Activated CD4-positive, alpha-beta T cell treated with anti-CD3 and anti-CD28 coated beads for 36 hours (primary cell): ENCODE measurements at regions of chr6 and their contacts with region 1.

Region 1: DNA sequence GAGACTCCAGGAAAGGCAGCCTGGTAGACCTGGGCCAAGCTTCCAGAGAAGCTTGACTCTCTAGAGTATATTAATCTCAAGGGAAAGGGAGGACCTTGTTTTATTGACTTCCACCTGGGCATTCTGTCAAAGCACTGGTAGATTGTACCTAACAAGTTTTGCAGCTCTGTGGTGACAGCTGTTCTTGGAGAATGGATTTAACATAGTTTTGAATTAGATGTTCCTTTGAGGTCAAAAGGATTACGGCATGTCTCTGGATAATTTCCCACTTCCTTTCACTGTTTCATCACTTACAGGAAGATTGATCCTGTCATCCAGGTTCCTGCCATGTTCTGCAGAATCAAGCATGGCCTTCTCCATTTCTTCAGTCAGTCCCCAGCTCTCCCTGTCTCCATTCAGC is 246.0 kb downstream of the PHACTR1 start:
- DNase-seq: no peak
- ATAC-seq: no peak
- H3K4me3 Mint-ChIP-seq: no peak overlapping the region
- H3K27ac Mint-ChIP-seq: no peak overlapping the region
- H3K4me1 Mint-ChIP-seq: peaks cover 16% of the 10 kb centered on the region
- H3K27me3 Mint-ChIP-seq: peaks cover 31% of the 10 kb centered on the region

Region 2: DNA sequence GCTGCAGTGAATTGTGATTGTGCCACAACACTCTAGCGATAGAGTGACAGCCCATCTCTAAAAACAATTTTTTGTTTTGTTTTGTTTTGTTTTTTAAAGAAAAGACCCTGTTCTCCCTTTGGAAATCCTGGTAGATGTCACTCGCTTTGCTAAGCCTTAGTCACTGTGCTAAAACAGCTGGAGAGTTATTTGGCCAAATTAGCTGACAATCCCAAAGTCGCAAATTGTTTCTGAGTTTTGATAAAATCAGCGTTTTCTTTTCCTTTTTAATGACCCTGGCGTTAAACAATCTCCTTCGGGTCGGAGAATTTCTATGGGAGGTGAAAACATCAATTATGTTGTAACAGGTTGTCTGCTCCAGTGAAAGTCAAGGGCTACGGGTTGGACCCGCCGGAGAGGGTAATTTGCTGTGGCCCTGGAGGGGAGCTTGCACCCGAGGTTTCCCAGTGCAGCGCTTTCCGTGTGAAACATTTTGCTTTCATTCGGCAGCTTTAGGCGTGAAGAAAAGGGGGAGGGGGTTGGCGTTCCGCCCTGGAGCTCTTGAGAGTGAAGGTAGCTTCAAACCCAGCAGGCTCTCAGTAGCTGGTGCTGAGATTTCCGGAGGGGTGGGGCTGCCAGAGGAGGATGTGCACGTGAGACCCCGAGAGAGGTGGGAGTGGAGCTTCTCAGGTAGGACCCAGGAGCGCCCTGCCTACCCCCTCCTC is 50.6 kb after region 1 on chr6:
- CTCF ChIA-PET with region 1: no interaction called
- POLR2A ChIA-PET with region 1: interaction called, 10 read pairs
- intact Hi-C with region 1: no loop called
- DNase-seq: peak; percentile 29
- ATAC-seq: peak; percentile 26
- H3K4me3 Mint-ChIP-seq: peak overlapping the region; percentile 64
- H3K27ac Mint-ChIP-seq: no peak overlapping the region
- H3K4me1 Mint-ChIP-seq: peaks cover 7% of the 10 kb centered on the region
- H3K27me3 Mint-ChIP-seq: peaks cover 48% of the 10 kb centered on the region